ENCODE measurements at regions of chr18 and their contacts with region 1.

Region 1: DNA sequence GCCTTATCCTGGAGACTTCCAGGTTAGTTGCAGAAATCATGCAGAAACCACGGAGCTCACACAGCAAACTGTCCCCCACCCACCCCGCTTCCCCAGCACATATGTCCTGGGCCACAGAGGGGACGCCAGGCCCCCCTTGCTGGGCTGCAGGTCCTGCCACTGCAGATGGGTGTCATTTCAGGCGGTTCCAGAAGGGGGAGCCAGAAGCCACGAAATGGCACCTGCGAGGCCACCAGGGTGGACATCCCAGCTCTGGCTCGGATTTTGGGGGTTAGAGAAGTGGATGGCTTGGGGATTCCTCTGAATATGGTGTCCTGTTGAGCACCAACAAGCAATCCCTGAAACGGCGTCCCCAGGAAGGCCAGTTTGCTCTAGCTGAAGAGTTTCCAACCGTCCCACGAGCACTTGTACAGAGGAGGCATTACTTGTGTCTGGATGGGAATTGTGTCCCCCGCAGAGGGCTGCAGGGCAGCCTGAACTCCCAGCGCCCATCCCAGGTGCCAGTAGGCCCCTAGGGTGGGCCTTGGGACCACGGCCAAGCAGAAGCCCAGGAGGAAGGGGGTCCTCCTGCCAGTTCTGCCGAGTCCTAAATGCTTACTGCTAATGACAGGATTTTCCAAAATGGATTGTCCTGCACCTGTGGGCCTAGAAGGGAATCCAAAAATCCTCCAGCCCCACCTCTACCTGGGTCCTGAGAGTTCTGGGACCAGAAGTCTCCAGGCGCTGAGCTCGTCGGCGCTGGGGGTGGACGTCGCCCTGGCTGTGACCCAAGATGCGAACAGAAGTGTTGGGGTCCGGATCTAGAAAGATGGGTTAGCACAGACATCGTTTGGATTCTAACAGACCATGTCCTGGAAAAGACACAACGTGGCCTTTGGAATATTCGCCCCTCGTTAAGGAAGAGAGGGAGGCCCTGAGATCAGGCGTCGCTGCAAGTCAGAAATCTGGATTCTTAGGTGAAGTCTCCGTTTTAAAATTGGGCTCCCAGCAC is 14.6 kb upstream of the NFATC1 start:
- DNase-seq: peak; percentile 74 to 78
- H3K4me3 ChIP-seq: no peak overlapping the region
- H3K27ac ChIP-seq: no peak overlapping the region
- H3K4me1 ChIP-seq: no peaks in the 10 kb centered on the region
- H3K27me3 ChIP-seq: no peaks in the 10 kb centered on the region
- CTCF ChIP-seq: peak; percentile 81 to 91 (median 90)
- POLR2A ChIP-seq: no peak

Region 2: DNA sequence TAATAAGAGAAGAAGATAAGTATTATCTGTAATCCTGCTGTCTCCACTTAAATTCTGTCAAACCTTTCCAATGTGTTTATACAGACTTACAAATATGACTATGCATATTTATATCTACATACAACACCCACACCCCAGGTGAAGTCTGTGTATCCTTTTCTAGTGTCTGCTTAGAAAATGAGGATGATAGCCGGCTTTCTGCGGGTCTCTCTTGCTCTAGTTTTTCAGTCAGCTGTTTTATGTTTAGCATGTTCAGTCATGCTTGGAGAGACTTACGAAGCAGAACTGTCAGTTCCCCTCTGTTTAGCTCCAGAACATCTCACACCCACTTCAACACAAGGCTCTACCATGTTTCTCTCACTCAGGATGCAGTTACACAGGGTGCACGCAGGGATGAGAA is 122.7 kb before region 1 on chr18:
- intact Hi-C with region 1: no loop called
- DNase-seq: no peak
- H3K4me3 ChIP-seq: no peak overlapping the region
- H3K27ac ChIP-seq: no peak overlapping the region
- H3K4me1 ChIP-seq: no peaks in the 10 kb centered on the region
- H3K27me3 ChIP-seq: no peaks in the 10 kb centered on the region
- CTCF ChIP-seq: no peak
- POLR2A ChIP-seq: no peak

Region 3: GRCh38 chr18:79528846-79529245 is 147.7 kb after region 1 on chr18:
- intact Hi-C with region 1: loop called (anchors 2 kb)
- DNase-seq: peak; percentile 70 to 73
- H3K4me3 ChIP-seq: no peak overlapping the region
- H3K27ac ChIP-seq: no peak overlapping the region
- H3K4me1 ChIP-seq: peaks cover 0 to 8% of the 10 kb centered on the region in 2 donors
- H3K27me3 ChIP-seq: no peaks in the 10 kb centered on the region
- CTCF ChIP-seq: peak; percentile 86 to 95 (median 92)
- POLR2A ChIP-seq: no peak

Region 4: DNA sequence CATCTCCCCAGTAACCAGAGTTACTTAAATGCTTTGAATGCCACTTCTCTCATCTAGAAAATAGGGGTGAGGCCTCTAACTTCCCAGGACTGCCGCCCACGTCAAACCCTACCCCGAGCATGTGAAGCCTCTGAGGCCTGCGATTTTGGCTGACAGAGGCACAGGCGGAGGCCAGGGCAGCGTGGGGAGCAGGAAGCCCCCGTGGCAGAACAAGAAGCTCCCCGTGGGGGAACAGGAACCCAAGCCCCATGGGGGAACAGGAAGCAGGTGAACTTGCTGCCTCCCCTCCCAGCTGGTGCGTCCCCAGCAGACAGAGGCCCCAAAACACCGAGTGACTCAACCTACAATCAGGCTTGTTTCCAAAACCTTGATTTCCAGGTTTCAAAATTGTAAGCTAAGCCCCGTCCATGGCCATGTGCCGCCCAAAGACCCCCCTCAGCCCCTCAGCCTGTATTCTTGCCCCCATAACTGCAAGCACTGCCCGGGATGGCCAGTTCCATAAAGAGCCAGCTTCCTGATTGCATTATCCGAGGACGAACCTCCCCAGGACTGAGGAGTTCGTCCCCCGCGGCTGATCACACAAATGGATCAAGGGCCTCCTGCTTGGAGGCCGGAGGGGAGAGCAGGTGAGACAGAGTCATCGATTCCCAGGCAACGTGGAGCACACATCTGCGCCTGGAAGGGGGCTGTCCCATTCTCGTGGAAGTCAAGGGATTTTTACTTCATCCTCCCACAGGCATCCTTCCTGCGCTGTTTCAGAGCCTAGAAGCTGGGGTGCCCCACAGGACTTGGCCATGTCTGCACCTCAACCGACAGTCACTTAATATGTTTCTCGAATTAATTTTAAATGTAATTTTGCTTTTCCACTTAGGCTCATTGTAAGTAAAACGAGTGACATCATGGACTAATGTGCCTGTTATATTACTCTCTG is 262.2 kb after region 1 on chr18:
- intact Hi-C with region 1: loop called (anchors 2 kb)
- DNase-seq: no peak
- H3K4me3 ChIP-seq: no peak overlapping the region
- H3K27ac ChIP-seq: no peak overlapping the region
- H3K4me1 ChIP-seq: peaks cover 0 to 9% of the 10 kb centered on the region in 2 donors
- H3K27me3 ChIP-seq: no peaks in the 10 kb centered on the region
- CTCF ChIP-seq: no peak
- POLR2A ChIP-seq: no peak

Region 5: GRCh38 chr18:79657342-79657985 is 276.4 kb after region 1 on chr18:
- intact Hi-C with region 1: no loop called
- DNase-seq: no peak
- H3K4me3 ChIP-seq: no peak overlapping the region
- H3K27ac ChIP-seq: no peak overlapping the region
- H3K4me1 ChIP-seq: no peaks in the 10 kb centered on the region
- H3K27me3 ChIP-seq: no peaks in the 10 kb centered on the region
- CTCF ChIP-seq: no peak
- POLR2A ChIP-seq: no peak